ENCODE measurements at regions of chr1 and their contacts with region 1.

Region 1: DNA sequence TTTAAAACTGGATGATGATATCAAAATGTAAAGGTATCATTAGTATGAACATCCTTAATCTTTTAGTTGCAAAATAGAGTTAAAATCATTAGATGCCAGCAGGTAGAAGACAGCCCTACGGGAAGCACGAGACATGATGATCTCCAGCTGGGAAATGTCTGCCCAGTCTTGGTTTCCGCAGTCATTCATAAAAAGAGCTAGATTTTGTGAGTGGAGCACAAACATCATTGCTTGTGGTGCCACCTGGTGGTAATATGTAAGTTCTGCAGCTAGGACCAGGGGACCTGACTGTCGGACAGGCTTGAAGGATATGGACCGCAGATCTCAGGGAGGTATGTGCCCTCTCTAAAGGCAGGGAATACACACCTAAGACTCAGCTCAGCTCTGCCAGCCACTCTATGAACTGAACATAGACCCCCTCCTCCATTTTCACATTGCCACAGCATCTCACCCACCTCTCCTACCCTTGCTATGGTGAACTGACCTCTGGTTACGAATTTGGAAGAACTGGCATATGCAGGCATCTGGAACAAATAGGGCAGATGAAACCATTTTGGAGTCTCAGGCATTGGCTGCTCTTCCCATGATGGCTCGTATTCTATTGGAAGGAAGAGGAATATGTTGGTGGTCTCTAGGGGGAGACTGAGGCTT is 9.2 kb downstream of the FCMR start:
- DNase-seq: peak; percentile 55
- H3K4me3 ChIP-seq: no peak overlapping the region
- H3K27ac ChIP-seq: no peak overlapping the region
- H3K27me3 ChIP-seq: peaks cover 14% of the 10 kb centered on the region
- CTCF ChIP-seq: peak; percentile 80

Region 2: GRCh38 chr1:206635080-206635977 is 277.2 kb before region 1 on chr1 and contains the start of gene DYRK3:
- CTCF ChIA-PET with region 1: interaction called, 37 read pairs
- POLR2A ChIA-PET with region 1: no interaction called
- DNase-seq: peak; percentile 78
- H3K4me3 ChIP-seq: peak within 1 kb of the TSS; percentile 80
- H3K27ac ChIP-seq: peak within 1 kb of the TSS; percentile 69
- H3K27me3 ChIP-seq: no peaks in the 10 kb centered on the region
- CTCF ChIP-seq: no peak
- polyA plus RNA-seq, gene DYRK3: 13.4 and 13.8 TPM in 2 replicates

Region 3: GRCh38 chr1:206716870-206717673 is 195.5 kb before region 1 on chr1:
- CTCF ChIA-PET with region 1: interaction called, 13 read pairs
- POLR2A ChIA-PET with region 1: no interaction called
- DNase-seq: no peak
- H3K4me3 ChIP-seq: no peak overlapping the region
- H3K27ac ChIP-seq: no peak overlapping the region
- H3K27me3 ChIP-seq: no peaks in the 10 kb centered on the region
- CTCF ChIP-seq: no peak

Region 4: GRCh38 chr1:206761159-206761768 is 151.3 kb before region 1 on chr1:
- CTCF ChIA-PET with region 1: interaction called, 14 read pairs
- POLR2A ChIA-PET with region 1: no interaction called
- DNase-seq: no peak
- H3K4me3 ChIP-seq: no peak overlapping the region
- H3K27ac ChIP-seq: no peak overlapping the region
- H3K27me3 ChIP-seq: no peaks in the 10 kb centered on the region
- CTCF ChIP-seq: peak; percentile 47

Region 5: GRCh38 chr1:206856674-206857464 is 55.7 kb before region 1 on chr1:
- CTCF ChIA-PET with region 1: interaction called, 14 read pairs
- POLR2A ChIA-PET with region 1: no interaction called
- DNase-seq: no peak
- H3K4me3 ChIP-seq: no peak overlapping the region
- H3K27ac ChIP-seq: no peak overlapping the region
- H3K27me3 ChIP-seq: no peaks in the 10 kb centered on the region
- CTCF ChIP-seq: peak; percentile 39

Region 6: DNA sequence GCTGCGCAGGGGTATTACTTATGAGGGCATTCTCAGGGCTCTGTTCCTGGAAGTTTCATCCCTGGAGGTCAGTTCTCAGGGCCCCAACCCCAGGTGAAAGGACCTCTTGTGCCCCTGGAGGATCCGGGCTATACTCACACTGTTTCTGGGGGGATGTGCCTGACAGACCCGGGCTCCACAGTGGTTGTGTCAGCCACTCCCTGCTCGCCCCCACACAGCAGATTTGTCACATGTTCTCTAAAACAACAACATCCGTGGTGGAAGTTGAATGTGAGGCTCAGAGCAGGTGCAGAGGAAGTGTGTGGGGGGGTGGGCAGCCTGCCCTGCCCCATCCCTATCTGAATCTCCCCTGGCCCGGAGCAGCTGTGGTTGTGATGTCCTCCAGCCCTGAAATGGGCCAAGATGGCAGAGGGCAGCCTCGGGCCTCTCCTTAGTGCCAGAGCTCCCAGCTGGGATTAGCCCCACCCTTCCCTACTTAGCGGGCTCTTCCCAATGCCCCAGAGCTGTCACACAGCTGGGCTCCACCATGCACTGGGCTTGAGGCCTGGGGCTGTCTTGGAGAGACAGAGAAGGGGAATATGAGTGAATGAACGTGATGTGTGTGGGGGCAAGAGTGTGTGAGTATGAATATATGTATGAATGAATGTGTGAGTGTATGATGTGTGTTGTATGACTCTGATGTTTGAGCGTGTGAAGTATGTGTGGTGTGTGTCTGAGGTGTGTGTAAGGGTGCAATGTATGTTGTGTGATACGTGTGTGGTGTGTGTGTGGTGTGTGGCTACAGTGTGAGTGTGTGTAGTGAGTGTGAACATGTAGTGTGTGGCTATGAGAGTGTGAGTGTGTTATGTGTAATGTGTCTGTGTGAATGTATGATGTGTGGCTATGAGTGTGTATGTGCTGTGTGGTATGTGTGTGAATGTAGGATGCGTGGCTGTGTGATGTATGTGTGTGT is 10.7 kb after region 1 on chr1:
- CTCF ChIA-PET with region 1: interaction called, 11 read pairs
- POLR2A ChIA-PET with region 1: no interaction called
- DNase-seq: no peak
- H3K4me3 ChIP-seq: no peak overlapping the region
- H3K27ac ChIP-seq: no peak overlapping the region
- H3K27me3 ChIP-seq: no peaks in the 10 kb centered on the region
- CTCF ChIP-seq: no peak